ENCODE measurements at regions of chr4 and their contacts with region 1.

Region 1: DNA sequence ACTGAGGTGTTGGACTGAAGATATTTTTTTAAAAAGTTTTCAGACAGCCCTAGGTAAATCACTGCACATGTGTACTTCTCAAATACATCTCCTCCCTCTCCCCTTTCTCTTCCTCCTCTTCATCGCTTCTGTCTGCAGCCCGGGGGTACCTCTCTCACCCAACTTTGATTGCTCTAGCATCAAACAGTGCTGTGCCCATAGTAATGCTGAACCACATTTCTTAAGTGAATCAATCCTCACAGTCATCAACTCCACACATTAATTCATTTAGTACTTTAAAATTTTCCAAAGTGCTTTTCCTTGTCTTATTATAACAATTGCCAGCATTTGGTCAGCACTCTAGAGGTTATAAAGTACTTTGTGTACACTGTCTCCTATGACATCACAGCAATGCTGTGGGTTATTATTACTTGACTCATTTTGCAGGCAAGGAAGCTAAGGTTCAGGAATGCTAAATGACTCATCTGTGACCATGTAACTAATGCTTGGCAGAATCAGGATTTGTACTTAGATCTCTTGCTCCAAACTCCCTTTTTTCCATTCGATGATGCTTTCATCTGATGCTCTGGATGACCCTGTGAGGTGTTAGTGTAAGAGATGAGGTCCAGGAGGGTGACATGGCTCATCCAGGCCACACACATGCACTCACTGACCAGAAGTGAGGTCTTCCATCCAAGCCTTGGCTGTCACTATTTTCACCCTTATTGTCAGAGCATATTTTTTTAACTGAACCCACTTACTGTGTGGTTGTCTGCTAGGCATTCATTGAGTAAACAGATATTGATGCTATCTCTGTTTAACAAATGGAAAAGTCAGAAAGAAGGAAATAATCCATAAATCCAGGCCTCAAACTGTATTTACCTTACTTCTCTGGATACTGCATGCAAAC is 58.8 kb downstream of the RHOH start:
- DNase-seq: peak; percentile 89
- H3K27ac ChIP-seq: peak overlapping the region; percentile 96
- CTCF ChIP-seq: no peak

Region 2: GRCh38 chr4:39846120-39846519 is 409.5 kb before region 1 on chr4:
- CTCF ChIA-PET with region 1: no interaction called
- POLR2A ChIA-PET with region 1: no interaction called
- DNase-seq: peak; percentile 7
- H3K27ac ChIP-seq: no peak overlapping the region
- CTCF ChIP-seq: no peak

Region 3: GRCh38 chr4:40199999-40200874 is 55.4 kb before region 1 on chr4:
- CTCF ChIA-PET with region 1: no interaction called
- POLR2A ChIA-PET with region 1: no interaction called
- DNase-seq: no peak
- H3K27ac ChIP-seq: no peak overlapping the region
- CTCF ChIP-seq: no peak

Region 4: GRCh38 chr4:40223343-40223742 is 32.3 kb before region 1 on chr4:
- CTCF ChIA-PET with region 1: no interaction called
- POLR2A ChIA-PET with region 1: interaction called, 10 read pairs
- DNase-seq: no peak
- H3K27ac ChIP-seq: no peak overlapping the region
- CTCF ChIP-seq: no peak

Region 5: DNA sequence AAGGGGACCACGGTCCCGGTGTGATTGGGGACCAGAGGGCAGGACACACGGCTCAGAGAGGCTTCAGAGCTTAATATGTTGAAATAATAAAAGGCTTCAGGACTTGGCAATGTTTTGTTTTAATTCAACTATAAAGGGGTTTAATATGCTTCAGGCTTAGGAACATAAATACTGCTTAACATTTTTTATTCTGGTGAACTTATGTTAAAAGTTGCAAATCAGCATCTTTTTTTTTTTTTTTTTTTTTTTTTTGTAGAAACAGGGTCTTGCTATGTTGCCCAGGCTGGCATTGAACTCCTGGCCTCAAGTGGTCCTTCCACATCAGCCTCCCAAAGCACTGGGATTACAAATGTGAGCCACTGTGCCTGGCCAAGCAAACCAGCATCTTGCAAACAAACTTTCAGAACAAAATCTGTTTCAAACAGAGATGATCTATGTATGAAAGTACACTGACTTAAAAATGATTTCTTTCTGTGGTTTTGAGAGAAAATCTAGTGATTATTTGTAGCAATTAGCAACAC is 21.1 kb before region 1 on chr4:
- CTCF ChIA-PET with region 1: no interaction called
- POLR2A ChIA-PET with region 1: no interaction called
- DNase-seq: no peak
- H3K27ac ChIP-seq: no peak overlapping the region
- CTCF ChIP-seq: no peak

Region 6: DNA sequence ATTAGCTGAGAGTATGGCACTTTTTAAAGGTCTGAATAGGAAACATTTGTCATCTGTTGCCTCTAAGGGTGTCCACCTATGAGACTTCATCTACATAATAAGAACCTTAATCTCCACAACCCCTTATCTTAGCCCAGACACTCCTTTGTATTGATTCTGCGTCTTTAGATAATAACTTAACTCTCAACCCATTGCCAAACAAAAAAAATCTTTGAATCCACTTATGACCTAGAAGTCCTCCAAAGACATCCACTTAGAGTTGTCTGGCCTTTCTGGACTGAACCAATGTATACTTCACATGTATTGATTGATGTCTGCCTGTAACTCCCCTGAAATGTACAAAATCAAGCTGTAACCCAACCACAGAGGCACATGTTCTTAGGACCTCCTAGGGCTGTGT is 13.5 kb after region 1 on chr4:
- CTCF ChIA-PET with region 1: no interaction called
- POLR2A ChIA-PET with region 1: no interaction called
- DNase-seq: no peak
- H3K27ac ChIP-seq: no peak overlapping the region
- CTCF ChIP-seq: no peak

Region 7: GRCh38 chr4:40800064-40800463 is 544.4 kb after region 1 on chr4:
- CTCF ChIA-PET with region 1: interaction called, 11 read pairs
- POLR2A ChIA-PET with region 1: no interaction called
- DNase-seq: no peak
- H3K27ac ChIP-seq: no peak overlapping the region
- CTCF ChIP-seq: no peak